SK-N-SH (cell line): ENCODE measurements at regions of chrX and their contacts with region 1.

Region 1: DNA sequence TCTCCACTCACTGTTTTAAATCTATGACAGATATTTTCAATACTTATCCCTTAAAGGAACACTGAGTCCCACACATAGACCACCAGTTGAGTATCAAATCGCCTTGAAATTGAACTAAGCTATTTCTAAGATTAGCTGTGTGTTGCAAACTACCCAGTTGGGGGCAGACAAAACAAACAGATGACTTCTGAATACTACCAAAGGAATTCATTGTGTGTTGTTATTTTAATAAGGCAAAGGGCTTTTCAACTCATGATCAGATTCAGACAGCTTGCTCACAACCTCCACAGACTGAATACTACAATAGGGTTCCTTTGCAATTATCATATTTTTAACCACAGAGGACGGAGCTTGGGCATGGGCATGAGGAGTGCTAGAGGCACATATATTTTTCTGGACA is 283.0 kb upstream of the GPC4 start:
- DNase-seq: peak; percentile 10
- H3K4me3 ChIP-seq: no peak overlapping the region
- H3K27ac ChIP-seq: no peak overlapping the region
- H3K4me1 ChIP-seq: no peaks in the 10 kb centered on the region
- H3K27me3 ChIP-seq: no peaks in the 10 kb centered on the region; the same call in none of the 2 replicates
- CTCF ChIP-seq: peak; percentile 53
- EP300 ChIP-seq: no peak
- RAD21 ChIP-seq: peak; percentile 75

Region 2: GRCh38 chrX:133685822-133686221 is 12.5 kb before region 1 on chrX:
- CTCF ChIA-PET with region 1: interaction called, 11 read pairs
- POLR2A ChIA-PET with region 1: no interaction called
- DNase-seq: peak; percentile 33
- H3K4me3 ChIP-seq: no peak overlapping the region
- H3K27ac ChIP-seq: no peak overlapping the region
- H3K4me1 ChIP-seq: no peaks in the 10 kb centered on the region; a peak in 1 of 4 replicates
- H3K27me3 ChIP-seq: peaks cover 5% of the 10 kb centered on the region; the same call in 1 of the 2 replicates
- CTCF ChIP-seq: no peak
- EP300 ChIP-seq: no peak
- RAD21 ChIP-seq: no peak

Region 3: GRCh38 chrX:133783274-133783673 is 85.0 kb after region 1 on chrX:
- CTCF ChIA-PET with region 1: interaction called, 10 read pairs
- POLR2A ChIA-PET with region 1: no interaction called
- DNase-seq: no peak
- H3K4me3 ChIP-seq: no peak overlapping the region
- H3K27ac ChIP-seq: no peak overlapping the region
- H3K4me1 ChIP-seq: peaks cover 0 to 5% of the 10 kb centered on the region in 2 experiments; a peak in 1 of 4 replicates
- H3K27me3 ChIP-seq: no peaks in the 10 kb centered on the region; the same call in 1 of the 2 replicates
- CTCF ChIP-seq: no peak
- EP300 ChIP-seq: no peak
- RAD21 ChIP-seq: no peak